Activated CD8-positive, alpha-beta T cell treated with anti-CD3 and anti-CD28 coated beads, Interleukin-2, amount 10 ng/mL, durations not matched to agents 7 days and 5 days (primary cell): ENCODE measurements at regions of chr3 and their contacts with region 1.

Region 1: GRCh38 chr3:119240591-119241434 is at the start of gene B4GALT4:
- DNase-seq: peak; percentile 85
- ATAC-seq: peak; percentile 87
- H3K4me3 Mint-ChIP-seq: peak within 1 kb of the TSS; percentile 79
- H3K27ac Mint-ChIP-seq: peak within 1 kb of the TSS; percentile 80
- H3K4me1 Mint-ChIP-seq: peaks cover 45% of the 10 kb centered on the region
- H3K27me3 Mint-ChIP-seq: no peaks in the 10 kb centered on the region
- total RNA-seq, gene B4GALT4: 16.3 to 16.4 TPM

Region 2: GRCh38 chr3:118791246-118791645 is 449.6 kb before region 1 on chr3:
- CTCF ChIA-PET with region 1: no interaction called
- POLR2A ChIA-PET with region 1: no interaction called
- DNase-seq: no peak
- ATAC-seq: no peak
- H3K4me3 Mint-ChIP-seq: no peak overlapping the region
- H3K27ac Mint-ChIP-seq: no peak overlapping the region
- H3K4me1 Mint-ChIP-seq: no peaks in the 10 kb centered on the region
- H3K27me3 Mint-ChIP-seq: no peaks in the 10 kb centered on the region

Region 3: DNA sequence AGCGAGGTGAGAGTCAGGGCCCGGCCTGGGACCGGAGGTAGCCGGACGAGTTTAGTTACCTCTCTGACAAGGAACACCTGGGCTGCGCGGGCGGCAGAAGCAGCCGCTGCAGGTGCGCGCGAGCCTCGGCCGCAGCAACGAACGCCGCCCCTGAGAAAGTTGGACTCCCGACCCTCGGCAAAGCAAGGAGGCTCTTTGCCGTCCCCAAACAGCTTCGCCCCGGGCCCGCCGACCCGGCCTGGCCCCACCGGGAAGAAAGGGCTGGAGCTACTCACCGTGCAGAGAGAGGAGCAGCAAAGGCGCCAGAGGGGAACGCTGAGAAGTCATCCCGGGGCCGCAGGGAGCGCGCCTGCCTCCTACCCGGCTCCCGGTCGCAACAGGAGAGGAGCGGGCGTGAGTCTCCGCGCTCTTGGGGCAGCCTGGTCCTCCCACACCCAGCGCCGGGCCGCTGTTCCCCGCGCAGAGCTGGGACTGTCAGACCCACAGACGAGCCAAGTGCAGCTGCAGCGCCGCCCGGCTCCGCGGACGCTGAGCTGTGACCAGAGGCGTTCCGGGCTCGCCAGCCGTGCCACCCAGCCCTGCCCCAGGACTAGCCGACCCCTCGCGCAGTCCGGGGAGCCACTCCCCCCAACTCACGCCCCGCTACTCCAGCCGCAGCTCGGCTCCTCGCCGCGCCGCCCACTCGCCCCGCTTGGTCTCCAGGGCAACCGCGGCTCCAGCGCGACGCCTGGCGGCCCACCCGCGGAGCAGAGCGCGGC is 206.4 kb before region 1 on chr3 and contains the start of gene IGSF11:
- CTCF ChIA-PET with region 1: interaction called, 11 read pairs
- POLR2A ChIA-PET with region 1: interaction called, 3 read pairs
- DNase-seq: peak; percentile 73
- ATAC-seq: peak; percentile 97
- H3K4me3 Mint-ChIP-seq: peak within 1 kb of the TSS; percentile 89
- H3K27ac Mint-ChIP-seq: peak within 1 kb of the TSS; percentile 43
- H3K4me1 Mint-ChIP-seq: peaks cover 13% of the 10 kb centered on the region
- H3K27me3 Mint-ChIP-seq: peaks cover 47% of the 10 kb centered on the region
- total RNA-seq, gene IGSF11: 2.0 to 2.5 TPM

Region 4: GRCh38 chr3:119145500-119146191 is 95.2 kb before region 1 on chr3 and contains the start of gene TEX55:
- CTCF ChIA-PET with region 1: interaction called, 66 read pairs
- POLR2A ChIA-PET with region 1: no interaction called
- DNase-seq: peak; percentile 23
- ATAC-seq: peak; percentile 55
- H3K4me3 Mint-ChIP-seq: no peak within 1 kb of the TSS
- H3K27ac Mint-ChIP-seq: no peak within 1 kb of the TSS
- H3K4me1 Mint-ChIP-seq: no peaks in the 10 kb centered on the region
- H3K27me3 Mint-ChIP-seq: no peaks in the 10 kb centered on the region
- total RNA-seq, gene TEX55: not detected

Region 5: GRCh38 chr3:119194237-119195150 is 46.3 kb before region 1 on chr3:
- CTCF ChIA-PET with region 1: no interaction called
- POLR2A ChIA-PET with region 1: no interaction called
- DNase-seq: no peak
- ATAC-seq: no peak
- H3K4me3 Mint-ChIP-seq: no peak overlapping the region
- H3K27ac Mint-ChIP-seq: no peak overlapping the region
- H3K4me1 Mint-ChIP-seq: no peaks in the 10 kb centered on the region
- H3K27me3 Mint-ChIP-seq: peaks cover 12% of the 10 kb centered on the region

Region 6: DNA sequence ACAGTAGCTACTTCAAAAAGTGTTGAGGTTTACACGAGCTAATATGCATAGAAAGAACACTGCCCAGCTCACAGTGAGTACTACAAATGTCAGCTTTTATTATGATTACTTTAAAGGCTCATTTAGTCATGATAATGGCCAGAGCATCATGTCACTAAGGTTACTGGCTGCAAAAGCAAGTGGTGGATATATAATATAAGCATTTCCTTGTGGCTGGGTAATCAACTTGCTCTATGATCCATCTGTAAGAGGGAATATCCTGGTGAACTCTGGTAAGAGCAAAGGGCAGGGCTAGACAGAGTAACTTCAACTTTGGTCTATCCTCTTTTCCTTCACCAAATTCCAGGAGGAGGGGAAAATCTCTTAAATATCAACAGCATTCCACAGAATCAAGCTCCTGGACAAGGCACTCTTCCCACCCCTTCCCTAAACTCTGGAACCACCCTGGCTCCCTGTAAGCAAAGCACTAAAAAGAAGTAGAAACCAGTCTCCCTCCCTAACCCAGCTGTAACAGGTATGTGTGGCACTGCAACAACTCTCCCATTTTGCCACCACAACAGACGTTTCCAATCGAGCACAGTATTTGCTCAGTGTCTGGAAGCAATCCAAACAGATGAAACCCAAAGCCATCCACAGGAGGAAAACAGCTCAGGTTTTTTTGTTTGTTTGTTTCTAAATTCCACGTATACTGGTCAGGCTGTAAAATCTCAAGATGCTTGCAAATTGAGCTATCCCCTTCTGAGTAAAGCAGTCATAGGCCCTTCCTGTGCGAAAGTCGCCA is 13.6 kb before region 1 on chr3:
- CTCF ChIA-PET with region 1: interaction called, 13 read pairs
- POLR2A ChIA-PET with region 1: interaction called, 5 read pairs
- DNase-seq: no peak
- ATAC-seq: no peak
- H3K4me3 Mint-ChIP-seq: no peak overlapping the region
- H3K27ac Mint-ChIP-seq: peak overlapping the region; percentile 23
- H3K4me1 Mint-ChIP-seq: peaks cover 17% of the 10 kb centered on the region
- H3K27me3 Mint-ChIP-seq: no peaks in the 10 kb centered on the region

Region 7: DNA sequence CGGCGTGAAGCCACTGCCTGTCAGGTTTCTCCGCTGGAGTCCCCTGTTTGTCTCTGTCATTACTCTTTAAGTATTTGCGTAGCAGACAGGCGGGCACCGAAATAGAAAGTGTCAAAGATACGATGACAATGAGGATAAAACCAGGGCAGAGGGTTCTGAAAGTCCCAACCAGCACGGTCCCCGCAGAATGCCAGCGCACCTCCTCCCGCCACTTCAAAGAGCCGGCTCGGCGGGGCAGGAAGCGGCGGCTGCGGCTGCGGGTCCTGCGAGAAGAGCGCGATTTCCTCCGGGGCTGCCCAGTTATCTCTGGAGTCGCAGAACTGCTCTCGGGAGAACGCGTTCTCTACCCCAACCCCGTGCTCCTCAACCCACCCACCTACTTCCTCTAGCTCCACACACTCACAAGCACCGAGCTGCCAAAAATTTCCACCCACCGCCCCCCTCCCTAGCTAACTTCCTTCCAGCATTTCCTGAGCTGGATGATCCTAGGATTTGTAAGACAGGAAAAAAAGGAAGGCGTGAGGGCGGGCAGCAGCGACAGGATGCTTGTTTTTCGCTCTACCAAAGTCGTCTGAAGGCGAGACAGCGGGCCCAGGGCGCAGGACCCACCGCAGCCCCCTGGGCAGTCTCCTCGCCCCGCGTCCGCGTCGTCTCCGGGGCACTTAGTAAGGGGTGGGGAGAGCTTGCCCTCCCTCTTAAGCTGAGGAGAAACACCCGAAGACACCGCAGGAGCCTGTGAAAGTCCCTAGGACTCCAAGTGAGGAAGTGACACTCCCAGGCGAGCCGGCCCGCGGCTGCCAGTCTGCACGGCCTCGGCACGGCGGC is 53.3 kb after region 1 on chr3 and contains the start of gene ARHGAP31:
- CTCF ChIA-PET with region 1: interaction called, 20 read pairs
- POLR2A ChIA-PET with region 1: interaction called, 11 read pairs
- DNase-seq: peak; percentile 89
- ATAC-seq: peak; percentile 77
- H3K4me3 Mint-ChIP-seq: peak within 1 kb of the TSS; percentile 79
- H3K27ac Mint-ChIP-seq: peak within 1 kb of the TSS; percentile 85
- H3K4me1 Mint-ChIP-seq: peaks cover 57% of the 10 kb centered on the region
- H3K27me3 Mint-ChIP-seq: peaks cover 13% of the 10 kb centered on the region
- total RNA-seq, gene ARHGAP31: 2.3 to 2.5 TPM

Region 8: GRCh38 chr3:119388577-119388976 is 147.8 kb after region 1 on chr3:
- CTCF ChIA-PET with region 1: no interaction called
- POLR2A ChIA-PET with region 1: no interaction called
- DNase-seq: no peak
- ATAC-seq: no peak
- H3K4me3 Mint-ChIP-seq: no peak overlapping the region
- H3K27ac Mint-ChIP-seq: peak overlapping the region; percentile 39
- H3K4me1 Mint-ChIP-seq: peaks cover 6% of the 10 kb centered on the region
- H3K27me3 Mint-ChIP-seq: no peaks in the 10 kb centered on the region

Region 9: GRCh38 chr3:119676771-119677640 is 436.2 kb after region 1 on chr3 and contains the start of gene COX17:
- CTCF ChIA-PET with region 1: interaction called, 26 read pairs
- POLR2A ChIA-PET with region 1: no interaction called
- DNase-seq: peak; percentile 98
- ATAC-seq: peak; percentile 94
- H3K4me3 Mint-ChIP-seq: peak within 1 kb of the TSS; percentile 96
- H3K27ac Mint-ChIP-seq: peak within 1 kb of the TSS; percentile 95
- H3K4me1 Mint-ChIP-seq: peaks cover 35% of the 10 kb centered on the region
- H3K27me3 Mint-ChIP-seq: no peaks in the 10 kb centered on the region
- total RNA-seq, gene COX17: 62.0 to 71.5 TPM